ENCODE measurements at regions of chr4 and their contacts with region 1.

Region 1: DNA sequence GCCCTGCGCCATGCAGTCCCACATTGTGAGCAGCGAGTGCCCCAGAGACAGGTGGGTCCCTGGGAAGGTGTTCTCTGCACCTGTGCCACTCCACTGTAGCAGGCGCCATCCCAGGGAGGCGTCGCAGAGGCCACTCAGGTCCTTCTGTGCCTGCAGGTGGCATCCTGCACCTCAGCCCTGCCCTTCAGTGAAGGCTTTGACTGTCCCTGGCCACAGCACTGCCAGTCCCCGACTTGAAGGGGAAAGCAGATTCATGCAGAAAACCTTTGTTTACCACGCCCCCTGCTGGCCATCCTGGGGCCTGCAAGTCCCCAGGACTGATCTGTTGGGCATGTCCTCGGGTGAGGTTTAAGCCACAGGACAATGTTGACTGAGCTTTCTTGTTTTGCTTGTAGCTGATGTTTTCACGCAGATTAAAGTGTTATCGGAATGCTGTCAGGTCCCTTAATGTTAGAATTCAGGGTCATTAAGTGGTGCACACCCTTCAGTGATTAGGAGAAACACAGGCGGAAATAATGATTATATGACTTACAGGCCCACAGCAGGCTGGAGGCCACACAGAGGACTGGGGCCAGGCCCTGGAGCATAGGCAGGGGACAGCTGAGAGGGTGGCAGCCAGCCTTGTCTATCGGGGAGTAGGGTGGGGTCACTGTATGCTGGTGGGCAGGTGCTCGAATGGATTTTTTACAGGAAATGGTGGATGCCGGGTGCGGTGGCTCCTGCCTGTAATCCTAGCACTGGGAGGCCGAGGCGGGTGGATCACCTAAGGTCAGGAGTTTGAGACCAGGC is 5.0 kb downstream of the TACC3 start:
- DNase-seq: peak; percentile 89
- ATAC-seq: peak in 7 of 8 donors; percentile 42 to 81 (median 61)
- H3K4me3 ChIP-seq: peak overlapping the region in 1 of 10 donors; percentile 9
- H3K27ac ChIP-seq: peak overlapping the region in 9 of 10 donors; percentile 63 to 87 (median 81)
- H3K4me1 ChIP-seq: peaks cover 13 to 82% (median 43%) of the 10 kb centered on the region in 9 donors
- H3K27me3 ChIP-seq: no peaks in the 10 kb centered on the region
- CTCF ChIP-seq: peak; percentile 97 to 99 (median 99)

Region 2: DNA sequence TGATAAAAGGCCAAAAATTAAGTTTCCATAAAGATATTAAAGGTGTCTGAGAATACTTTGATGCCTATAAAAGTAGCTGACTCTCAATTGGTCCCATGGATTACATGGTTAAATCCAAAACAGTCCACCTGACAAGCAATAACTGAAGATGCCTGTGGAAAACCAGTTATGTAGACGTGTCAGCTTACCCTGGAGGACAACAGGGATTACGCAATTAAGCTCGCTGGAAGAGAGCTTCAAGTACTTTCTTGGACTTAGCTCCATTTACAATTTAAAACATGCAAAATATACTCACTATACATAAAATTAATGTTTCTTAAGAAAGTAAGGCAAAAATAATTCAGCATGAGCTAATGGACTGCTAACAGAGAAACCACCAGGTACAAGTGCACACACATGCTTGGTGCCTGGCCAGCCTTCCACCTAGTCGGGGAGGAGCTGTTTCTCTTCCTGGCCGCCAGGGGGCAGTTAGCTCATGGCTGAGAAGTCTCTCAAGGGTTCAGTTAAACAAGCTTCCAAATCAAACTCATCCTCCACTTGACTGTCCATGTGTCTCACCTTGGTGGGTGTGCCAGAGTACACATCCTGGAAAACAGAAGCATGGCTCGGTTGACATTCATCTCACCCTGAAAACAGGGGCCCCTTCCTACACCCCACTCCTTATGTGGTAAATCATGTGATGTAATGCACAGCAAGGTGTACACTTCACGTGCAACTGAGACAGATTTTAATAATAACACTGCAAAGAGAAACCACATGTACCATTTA is 33.0 kb before region 1 on chr4:
- intact Hi-C with region 1: loop called (anchors 1 to 5 kb)
- DNase-seq: peak; percentile 48 to 71
- ATAC-seq: peak; percentile 46 to 86 (median 78)
- H3K4me3 ChIP-seq: no peak overlapping the region
- H3K27ac ChIP-seq: no peak overlapping the region
- H3K4me1 ChIP-seq: no peaks in the 10 kb centered on the region
- H3K27me3 ChIP-seq: no peaks in the 10 kb centered on the region
- CTCF ChIP-seq: peak; percentile 86 to 97 (median 93)